Mammary epithelial cell (primary cell): ENCODE measurements at regions of chr19 and their contacts with region 1.

Region 1: DNA sequence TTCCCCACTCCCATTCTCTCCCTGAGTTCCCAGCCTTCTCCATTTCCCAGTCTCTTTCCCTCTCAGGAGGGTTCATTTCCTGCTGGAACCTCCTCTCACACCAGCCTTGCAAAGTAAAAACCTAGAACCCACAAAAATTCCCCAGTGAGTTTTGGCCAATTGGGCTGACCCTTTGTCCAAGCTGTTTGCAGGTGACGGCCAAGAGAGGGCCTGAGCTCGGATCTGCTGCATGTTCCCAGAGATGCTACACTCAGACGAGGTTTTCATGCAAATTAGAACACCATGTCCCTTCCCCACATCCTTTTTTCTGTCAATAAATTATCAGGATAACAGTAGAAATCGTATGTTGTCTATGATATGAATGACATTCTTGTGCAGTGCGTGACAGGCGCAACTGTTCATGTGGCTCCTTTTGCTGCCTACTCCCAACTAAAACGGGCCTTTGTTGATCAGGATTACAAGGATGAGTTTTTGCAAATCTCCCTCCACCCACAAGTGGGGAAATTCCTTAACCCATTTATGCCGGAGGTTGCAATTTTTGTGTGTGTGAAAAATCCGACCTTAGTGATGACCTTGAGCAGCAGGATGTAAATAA is 149.5 kb downstream of the CACNA1A start:
- DNase-seq: no peak
- H3K4me3 ChIP-seq: no peak overlapping the region
- H3K27ac ChIP-seq: no peak overlapping the region
- H3K4me1 ChIP-seq: no peaks in the 10 kb centered on the region
- H3K27me3 ChIP-seq: no peaks in the 10 kb centered on the region
- CTCF ChIP-seq: no peak

Region 2: GRCh38 chr19:13408889-13409518 is 52.2 kb after region 1 on chr19:
- CTCF ChIA-PET with region 1: no interaction called
- dilution Hi-C with region 1: no loop called
- in situ Hi-C with region 1: no loop called
- intact Hi-C with region 1: no loop called
- DNase-seq: no peak
- H3K4me3 ChIP-seq: no peak overlapping the region
- H3K27ac ChIP-seq: no peak overlapping the region
- H3K4me1 ChIP-seq: no peaks in the 10 kb centered on the region
- H3K27me3 ChIP-seq: no peaks in the 10 kb centered on the region
- CTCF ChIP-seq: no peak

Region 3: GRCh38 chr19:13441810-13442512 is 85.2 kb after region 1 on chr19:
- CTCF ChIA-PET with region 1: no interaction called
- dilution Hi-C with region 1: loop called (anchors 5 kb)
- in situ Hi-C with region 1: no loop called
- intact Hi-C with region 1: no loop called
- DNase-seq: peak; percentile 21
- H3K4me3 ChIP-seq: no peak overlapping the region
- H3K27ac ChIP-seq: no peak overlapping the region
- H3K4me1 ChIP-seq: no peaks in the 10 kb centered on the region
- H3K27me3 ChIP-seq: no peaks in the 10 kb centered on the region
- CTCF ChIP-seq: no peak

Region 4: GRCh38 chr19:13476071-13476470 is 119.3 kb after region 1 on chr19:
- CTCF ChIA-PET with region 1: no interaction called
- dilution Hi-C with region 1: no loop called
- in situ Hi-C with region 1: no loop called
- intact Hi-C with region 1: no loop called
- DNase-seq: no peak
- H3K4me3 ChIP-seq: no peak overlapping the region
- H3K27ac ChIP-seq: no peak overlapping the region
- H3K4me1 ChIP-seq: no peaks in the 10 kb centered on the region
- H3K27me3 ChIP-seq: no peaks in the 10 kb centered on the region
- CTCF ChIP-seq: no peak

Region 5: GRCh38 chr19:13505164-13505695 is 148.4 kb after region 1 on chr19:
- CTCF ChIA-PET with region 1: no interaction called
- dilution Hi-C with region 1: no loop called
- in situ Hi-C with region 1: no loop called
- intact Hi-C with region 1: no loop called
- DNase-seq: no peak
- H3K4me3 ChIP-seq: no peak overlapping the region
- H3K27ac ChIP-seq: no peak overlapping the region
- H3K4me1 ChIP-seq: peaks cover 2% of the 10 kb centered on the region
- H3K27me3 ChIP-seq: peaks cover 27% of the 10 kb centered on the region
- CTCF ChIP-seq: no peak